T-cell (primary cell): ENCODE measurements at regions of chr3 and their contacts with region 1.

Region 1: GRCh38 chr3:172799251-172799650 is 48.7 kb downstream of the ECT2 start:
- DNase-seq: no peak
- ATAC-seq: no peak
- H3K4me3 ChIP-seq: no peak overlapping the region
- H3K4me3 Mint-ChIP-seq: no peak overlapping the region
- H3K27ac ChIP-seq: no peak overlapping the region
- H3K27ac Mint-ChIP-seq: no peak overlapping the region
- H3K4me1 ChIP-seq: no peaks in the 10 kb centered on the region
- H3K4me1 Mint-ChIP-seq: no peaks in the 10 kb centered on the region
- H3K27me3 ChIP-seq: no peaks in the 10 kb centered on the region
- H3K27me3 Mint-ChIP-seq: no peaks in the 10 kb centered on the region

Region 2: DNA sequence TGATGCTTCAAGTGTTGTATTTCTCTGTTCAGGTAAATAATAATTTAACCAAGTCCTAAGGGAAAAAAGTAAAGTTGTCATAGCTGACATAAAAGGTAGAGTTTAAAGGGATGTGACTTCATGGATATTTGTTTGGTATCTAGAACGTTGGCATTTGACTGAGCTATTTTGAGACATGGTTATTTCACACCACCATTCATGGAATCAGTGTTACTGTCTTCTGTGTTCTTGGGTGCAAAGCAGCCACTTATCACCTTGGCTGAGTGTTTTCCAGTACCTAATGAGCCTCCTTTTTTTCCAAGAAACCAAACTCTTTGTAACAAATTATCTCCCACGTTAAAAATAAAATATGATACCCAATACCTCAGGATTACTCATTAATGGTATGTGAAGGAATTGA is 506.8 kb before region 1 on chr3:
- CTCF ChIA-PET with region 1: no interaction called
- POLR2A ChIA-PET with region 1: interaction called in 1 of 2 experiments, 11 read pairs
- DNase-seq: no peak
- ATAC-seq: no peak
- H3K4me3 ChIP-seq: no peak overlapping the region
- H3K4me3 Mint-ChIP-seq: no peak overlapping the region
- H3K27ac ChIP-seq: no peak overlapping the region
- H3K27ac Mint-ChIP-seq: no peak overlapping the region
- H3K4me1 ChIP-seq: no peaks in the 10 kb centered on the region
- H3K4me1 Mint-ChIP-seq: peaks cover 22 to 23% (median 22%) of the 10 kb centered on the region in 3 donors
- H3K27me3 ChIP-seq: no peaks in the 10 kb centered on the region
- H3K27me3 Mint-ChIP-seq: no peaks in the 10 kb centered on the region

Region 3: DNA sequence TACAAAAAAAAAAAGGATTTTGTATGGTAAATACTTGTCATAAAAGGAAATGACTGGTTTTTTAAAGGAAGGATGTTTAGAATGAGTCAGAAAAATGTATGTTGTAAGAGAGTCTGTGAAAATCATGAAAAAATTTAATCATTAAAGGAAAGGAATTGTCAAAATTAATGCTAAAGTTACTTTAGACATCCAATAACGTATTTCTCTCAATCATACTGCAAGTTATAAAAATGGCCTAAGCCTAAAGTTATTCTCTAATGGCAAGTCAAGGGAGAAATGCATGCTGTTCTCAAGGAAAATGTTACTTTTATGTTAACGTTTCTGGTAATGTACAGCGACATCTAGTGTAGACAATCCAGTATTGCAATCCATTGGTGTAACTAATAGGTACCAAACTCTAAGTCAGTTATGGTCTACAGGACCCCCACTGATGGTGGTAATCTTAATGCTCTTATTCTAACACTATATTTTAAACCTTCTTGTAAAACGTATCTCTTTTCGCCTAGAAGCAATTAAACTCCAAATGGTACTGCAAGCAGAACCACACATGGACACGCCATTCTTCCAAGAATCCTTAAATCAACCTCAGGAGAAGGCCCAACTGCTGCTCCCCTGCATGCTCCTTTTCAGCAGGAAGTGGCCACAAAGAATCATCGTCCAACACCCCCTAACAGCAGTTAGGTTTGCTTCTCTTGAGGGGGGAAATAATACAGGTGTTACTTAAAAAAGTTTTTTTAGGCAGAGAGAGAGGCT is 123.6 kb before region 1 on chr3:
- CTCF ChIA-PET with region 1: no interaction called
- POLR2A ChIA-PET with region 1: no interaction called
- DNase-seq: peak in 2 of 35 experiments; percentile 11 to 70
- ATAC-seq: peak in 1 of 4 experiments; percentile 46
- H3K4me3 ChIP-seq: no peak overlapping the region
- H3K4me3 Mint-ChIP-seq: no peak overlapping the region
- H3K27ac ChIP-seq: no peak overlapping the region
- H3K27ac Mint-ChIP-seq: no peak overlapping the region
- H3K4me1 ChIP-seq: no peaks in the 10 kb centered on the region
- H3K4me1 Mint-ChIP-seq: peaks cover 6% of the 10 kb centered on the region in 3 donors
- H3K27me3 ChIP-seq: no peaks in the 10 kb centered on the region
- H3K27me3 Mint-ChIP-seq: no peaks in the 10 kb centered on the region

Region 4: DNA sequence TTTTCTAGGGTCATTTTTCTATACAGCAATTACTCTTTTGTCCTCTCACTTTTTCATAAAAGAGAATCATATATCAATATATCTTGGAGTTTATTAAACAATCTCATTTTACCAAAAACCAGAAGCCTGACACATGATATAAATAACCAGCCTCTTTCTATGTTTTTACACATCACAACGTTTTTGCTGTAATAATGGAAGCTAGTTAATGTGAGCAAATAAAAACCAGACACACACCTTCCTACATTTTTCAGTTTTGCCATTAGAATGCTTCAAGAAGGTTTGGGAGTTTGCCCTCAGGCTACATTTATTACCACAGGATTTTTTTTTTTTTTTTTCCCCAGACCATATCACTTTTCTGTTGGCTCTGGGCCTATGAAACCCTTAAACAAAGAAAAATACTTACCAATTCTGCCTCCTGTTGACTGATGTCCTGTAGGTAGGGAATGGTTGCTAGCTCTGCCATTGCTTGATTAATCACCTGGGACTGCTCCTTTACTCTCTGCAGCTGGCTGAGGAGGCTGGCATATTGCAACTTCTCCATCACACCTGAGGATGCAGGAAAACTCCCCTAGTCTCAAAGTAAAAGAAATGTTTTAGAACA is 116.8 kb after region 1 on chr3:
- CTCF ChIA-PET with region 1: no interaction called
- POLR2A ChIA-PET with region 1: no interaction called
- DNase-seq: no peak
- ATAC-seq: no peak
- H3K4me3 ChIP-seq: no peak overlapping the region
- H3K4me3 Mint-ChIP-seq: no peak overlapping the region
- H3K27ac ChIP-seq: no peak overlapping the region
- H3K27ac Mint-ChIP-seq: no peak overlapping the region
- H3K4me1 ChIP-seq: no peaks in the 10 kb centered on the region
- H3K4me1 Mint-ChIP-seq: no peaks in the 10 kb centered on the region
- H3K27me3 ChIP-seq: no peaks in the 10 kb centered on the region
- H3K27me3 Mint-ChIP-seq: peaks cover 15 to 17% of the 10 kb centered on the region in 2 donors

Region 5: GRCh38 chr3:173733029-173733652 is 933.9 kb after region 1 on chr3:
- CTCF ChIA-PET with region 1: no interaction called
- POLR2A ChIA-PET with region 1: no interaction called
- DNase-seq: no peak
- ATAC-seq: no peak
- H3K4me3 ChIP-seq: no peak overlapping the region
- H3K4me3 Mint-ChIP-seq: no peak overlapping the region
- H3K27ac ChIP-seq: no peak overlapping the region
- H3K27ac Mint-ChIP-seq: no peak overlapping the region
- H3K4me1 ChIP-seq: no peaks in the 10 kb centered on the region
- H3K4me1 Mint-ChIP-seq: no peaks in the 10 kb centered on the region
- H3K27me3 ChIP-seq: no peaks in the 10 kb centered on the region
- H3K27me3 Mint-ChIP-seq: no peaks in the 10 kb centered on the region